SK-N-SH (cell line): ENCODE measurements at regions of chr6 and their contacts with region 1.

Region 1: DNA sequence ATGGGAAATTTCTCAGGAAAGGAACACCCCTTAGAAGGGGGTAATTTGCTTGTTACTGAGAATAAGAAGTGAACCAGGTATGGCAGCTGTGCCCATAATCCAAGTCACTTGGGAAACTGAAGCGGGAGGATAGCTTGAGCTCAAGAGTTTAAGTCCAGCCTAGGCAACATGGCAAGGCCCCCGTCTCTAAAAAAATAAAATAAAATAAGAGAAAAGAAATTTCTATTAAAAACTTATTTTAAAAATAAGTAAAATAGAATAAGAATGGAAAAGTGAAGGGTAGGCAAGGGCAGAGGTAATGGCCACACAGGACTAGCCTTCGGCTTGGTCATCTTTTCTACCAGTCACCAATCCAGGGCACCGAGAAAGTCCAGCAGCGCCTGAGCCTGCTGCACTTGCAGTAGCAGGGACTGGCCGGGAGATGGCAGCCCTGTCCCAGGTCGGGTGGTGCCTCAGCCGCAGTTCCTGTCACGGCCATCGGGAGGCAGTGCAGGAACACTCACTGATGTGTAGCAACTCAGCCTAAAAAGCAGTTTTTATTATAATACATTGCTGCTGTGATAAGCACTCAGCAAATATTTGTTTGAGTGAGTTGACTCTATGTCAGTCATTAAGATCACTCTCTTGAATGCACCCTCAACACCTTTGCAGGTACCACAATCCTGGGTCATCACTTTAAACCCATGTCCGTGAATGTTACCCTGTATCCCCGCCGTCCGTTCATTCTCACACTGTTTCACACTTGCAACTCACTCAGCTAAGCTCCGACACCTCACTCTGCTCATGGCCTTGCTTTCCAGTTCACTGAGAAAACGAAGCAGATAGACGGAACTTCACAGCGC is 23.2 kb upstream of the GCM1 start:
- DNase-seq: peak; percentile 80
- H3K4me3 ChIP-seq: peak overlapping the region in 1 of 2 experiments; percentile 50; a peak in 1 of 4 replicates
- H3K27ac ChIP-seq: no peak overlapping the region
- H3K4me1 ChIP-seq: no peaks in the 10 kb centered on the region; a peak in 1 of 4 replicates
- H3K27me3 ChIP-seq: no peaks in the 10 kb centered on the region
- CTCF ChIP-seq: peak; percentile 100
- EP300 ChIP-seq: no peak
- RAD21 ChIP-seq: peak; percentile 100

Region 2: GRCh38 chr6:53119772-53120409 is 51.9 kb before region 1 on chr6:
- CTCF ChIA-PET with region 1: no interaction called
- POLR2A ChIA-PET with region 1: no interaction called
- DNase-seq: no peak
- H3K4me3 ChIP-seq: no peak overlapping the region
- H3K27ac ChIP-seq: no peak overlapping the region
- H3K4me1 ChIP-seq: no peaks in the 10 kb centered on the region
- H3K27me3 ChIP-seq: no peaks in the 10 kb centered on the region; the same call in 1 of the 2 replicates
- CTCF ChIP-seq: no peak
- EP300 ChIP-seq: no peak
- RAD21 ChIP-seq: no peak

Region 3: GRCh38 chr6:53294095-53294494 is 122.3 kb after region 1 on chr6:
- CTCF ChIA-PET with region 1: interaction called, 34 read pairs
- POLR2A ChIA-PET with region 1: no interaction called
- DNase-seq: peak; percentile 60
- H3K4me3 ChIP-seq: no peak overlapping the region
- H3K27ac ChIP-seq: no peak overlapping the region
- H3K4me1 ChIP-seq: peaks cover 9 to 15% of the 10 kb centered on the region in 2 experiments
- H3K27me3 ChIP-seq: no peaks in the 10 kb centered on the region
- CTCF ChIP-seq: peak; percentile 74
- EP300 ChIP-seq: no peak
- RAD21 ChIP-seq: peak; percentile 63

Region 4: DNA sequence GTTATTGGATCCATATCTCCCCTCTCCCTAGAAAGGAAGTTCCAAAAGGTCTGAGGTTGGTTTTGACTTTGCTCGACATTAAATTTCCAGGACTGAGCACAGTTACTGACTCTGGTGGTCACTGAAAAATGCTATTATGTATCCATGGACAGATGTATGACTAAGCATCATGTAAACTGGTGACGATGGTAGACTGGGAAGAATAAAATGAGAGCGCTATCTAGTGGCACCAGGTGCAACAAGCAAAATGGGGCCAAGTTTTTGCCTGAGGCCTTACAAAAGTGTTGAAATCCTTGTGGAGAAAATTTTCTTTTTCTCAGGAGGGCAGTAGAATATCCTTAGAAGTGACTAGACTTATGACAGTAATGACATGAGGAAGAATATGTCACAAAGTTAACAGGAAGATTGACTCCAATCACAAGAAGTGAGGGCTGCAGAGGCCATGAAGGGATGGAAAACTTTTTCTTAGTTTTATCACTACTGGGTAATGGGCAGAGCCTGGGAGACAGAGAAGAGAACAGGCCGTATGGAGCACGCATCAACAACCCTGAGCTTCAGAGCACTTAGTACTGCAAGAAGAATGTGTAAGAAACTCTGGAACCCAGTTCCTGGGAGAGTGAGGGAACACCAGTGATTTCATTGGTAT is 265.9 kb after region 1 on chr6:
- CTCF ChIA-PET with region 1: interaction called, 22 read pairs
- POLR2A ChIA-PET with region 1: no interaction called
- DNase-seq: peak; percentile 24
- H3K4me3 ChIP-seq: no peak overlapping the region
- H3K27ac ChIP-seq: no peak overlapping the region
- H3K4me1 ChIP-seq: no peaks in the 10 kb centered on the region; a peak in 1 of 4 replicates
- H3K27me3 ChIP-seq: no peaks in the 10 kb centered on the region
- CTCF ChIP-seq: peak; percentile 80
- EP300 ChIP-seq: no peak
- RAD21 ChIP-seq: peak; percentile 77

Region 5: DNA sequence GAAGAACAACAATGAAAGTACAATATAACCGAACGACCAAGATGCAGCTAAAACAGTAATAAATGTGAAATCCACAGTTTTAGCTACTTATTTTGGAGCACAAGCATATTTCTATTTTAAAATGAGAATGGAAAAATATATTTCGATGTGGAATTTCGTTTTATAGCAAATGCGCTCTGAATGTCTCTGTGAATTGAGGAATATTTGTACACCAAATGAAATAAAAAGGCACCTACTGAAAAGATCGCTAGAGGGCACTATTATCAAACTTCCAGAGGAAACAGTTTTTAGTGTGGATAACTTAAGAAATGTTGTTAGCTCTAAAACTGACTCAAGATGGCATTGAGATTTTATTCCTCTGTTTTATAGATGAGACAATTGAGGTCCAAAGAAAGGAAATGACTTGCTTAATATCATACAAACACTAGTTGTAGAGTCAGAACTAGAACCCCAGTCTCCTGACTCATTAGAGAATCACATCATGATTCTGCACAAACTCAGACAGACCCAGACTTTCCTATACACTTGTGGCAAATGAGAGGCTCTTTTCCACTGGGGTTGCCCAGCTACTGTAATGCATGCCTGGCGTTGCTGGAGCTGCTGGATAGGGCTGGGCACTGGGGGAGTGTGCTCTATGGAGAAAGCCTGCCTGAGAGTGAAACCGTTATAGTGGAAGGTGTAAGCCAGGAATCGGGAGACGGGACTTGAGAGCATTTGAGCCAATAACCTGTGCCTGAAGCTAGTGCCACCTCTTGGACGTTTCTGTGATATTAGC is 321.2 kb after region 1 on chr6:
- CTCF ChIA-PET with region 1: interaction called, 11 read pairs
- POLR2A ChIA-PET with region 1: no interaction called
- DNase-seq: peak; percentile 30
- H3K4me3 ChIP-seq: peak overlapping the region; percentile 28 to 40; a peak in 2 of 4 replicates
- H3K27ac ChIP-seq: no peak overlapping the region
- H3K4me1 ChIP-seq: peaks cover 2 to 9% of the 10 kb centered on the region in 2 experiments; a peak in 3 of 4 replicates
- H3K27me3 ChIP-seq: no peaks in the 10 kb centered on the region
- CTCF ChIP-seq: peak; percentile 87
- EP300 ChIP-seq: no peak
- RAD21 ChIP-seq: peak; percentile 83